Activated CD8-positive, alpha-beta memory T cell treated with anti-CD3 and anti-CD28 coated beads, Interleukin-2, amount 10 ng/mL, durations not matched to agents 7 days and 5 days (primary cell): ENCODE measurements at regions of chr3 and their contacts with region 1.

Region 1: DNA sequence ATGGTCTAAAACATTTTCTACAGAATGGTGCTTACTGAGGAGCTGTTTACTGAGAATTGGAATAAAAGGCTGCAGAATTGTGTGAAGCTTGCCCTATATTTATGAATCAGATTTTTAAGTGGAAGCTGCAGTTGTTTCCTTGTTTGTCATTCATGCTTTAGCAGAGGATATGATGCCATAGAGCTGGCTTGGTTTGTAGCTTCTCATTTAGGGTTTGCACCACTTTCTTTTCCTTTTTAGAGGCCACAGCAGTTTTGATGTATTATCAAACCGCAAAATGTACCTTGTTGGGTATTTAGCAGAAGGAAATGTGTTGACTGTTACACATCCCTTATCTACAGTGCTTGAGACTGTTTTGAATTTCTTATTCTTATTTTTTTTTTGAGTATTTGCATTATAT is 66.2 kb downstream of the RASA2 start:
- DNase-seq: peak; percentile 58
- ATAC-seq: peak; percentile 81
- H3K4me3 Mint-ChIP-seq: no peak overlapping the region
- H3K27ac Mint-ChIP-seq: peak overlapping the region; percentile 88
- H3K4me1 Mint-ChIP-seq: peaks cover 44% of the 10 kb centered on the region
- H3K27me3 Mint-ChIP-seq: no peaks in the 10 kb centered on the region

Region 2: GRCh38 chr3:141487521-141488252 is 65.4 kb before region 1 on chr3:
- CTCF ChIA-PET with region 1: interaction called, 14 read pairs
- DNase-seq: peak; percentile 97
- ATAC-seq: peak; percentile 73
- H3K4me3 Mint-ChIP-seq: peak overlapping the region; percentile 83
- H3K27ac Mint-ChIP-seq: peak overlapping the region; percentile 98
- H3K4me1 Mint-ChIP-seq: peaks cover 65% of the 10 kb centered on the region
- H3K27me3 Mint-ChIP-seq: peaks cover 2% of the 10 kb centered on the region

Region 3: DNA sequence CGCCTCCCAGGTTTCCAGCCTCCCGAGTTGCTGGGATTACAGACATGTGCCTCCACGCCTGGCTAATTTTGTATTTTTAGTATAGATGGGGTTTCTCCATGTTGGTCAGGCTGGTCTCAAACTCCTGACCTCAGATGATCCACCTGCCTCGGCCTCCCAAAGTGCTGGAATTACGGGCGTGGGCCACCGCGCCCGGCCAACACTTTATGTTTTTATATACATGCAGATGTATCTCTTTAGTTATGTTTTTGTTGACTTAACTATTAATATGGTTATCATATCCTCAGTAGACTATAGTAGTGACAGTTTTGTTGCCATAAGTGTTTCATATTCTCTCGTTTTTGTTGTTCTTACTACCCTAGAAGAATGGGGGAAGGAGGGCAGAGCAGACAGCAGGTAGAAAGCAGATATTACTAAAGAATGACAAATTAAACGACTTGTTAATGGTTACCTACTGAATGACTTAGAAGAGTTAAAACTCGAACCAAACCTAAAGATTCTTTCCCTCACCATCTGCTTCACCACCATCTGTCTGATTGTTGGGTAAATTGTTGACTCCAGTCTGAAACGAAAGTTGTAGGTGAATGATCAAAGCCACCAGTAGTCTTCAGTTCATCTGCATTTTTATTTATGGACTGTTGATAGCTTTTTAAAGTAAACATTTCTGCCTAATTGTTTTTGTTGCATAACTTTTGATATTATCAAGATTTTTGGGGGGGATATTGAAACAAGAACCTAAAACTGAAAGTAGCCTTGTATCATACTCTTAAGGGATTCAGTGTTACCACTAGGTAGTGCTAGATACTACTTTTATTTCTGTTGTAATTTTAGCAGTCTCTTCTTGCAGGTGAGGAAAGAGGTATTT is 23.1 kb after region 1 on chr3:
- CTCF ChIA-PET with region 1: no interaction called
- DNase-seq: no peak
- ATAC-seq: peak; percentile 80
- H3K4me3 Mint-ChIP-seq: peak overlapping the region; percentile 47
- H3K27ac Mint-ChIP-seq: peak overlapping the region; percentile 79
- H3K4me1 Mint-ChIP-seq: peaks cover 15% of the 10 kb centered on the region
- H3K27me3 Mint-ChIP-seq: no peaks in the 10 kb centered on the region